Colonic mucosa (tissue), 4 donors: ENCODE measurements at regions of chr7 and their contacts with region 1.

Region 1: DNA sequence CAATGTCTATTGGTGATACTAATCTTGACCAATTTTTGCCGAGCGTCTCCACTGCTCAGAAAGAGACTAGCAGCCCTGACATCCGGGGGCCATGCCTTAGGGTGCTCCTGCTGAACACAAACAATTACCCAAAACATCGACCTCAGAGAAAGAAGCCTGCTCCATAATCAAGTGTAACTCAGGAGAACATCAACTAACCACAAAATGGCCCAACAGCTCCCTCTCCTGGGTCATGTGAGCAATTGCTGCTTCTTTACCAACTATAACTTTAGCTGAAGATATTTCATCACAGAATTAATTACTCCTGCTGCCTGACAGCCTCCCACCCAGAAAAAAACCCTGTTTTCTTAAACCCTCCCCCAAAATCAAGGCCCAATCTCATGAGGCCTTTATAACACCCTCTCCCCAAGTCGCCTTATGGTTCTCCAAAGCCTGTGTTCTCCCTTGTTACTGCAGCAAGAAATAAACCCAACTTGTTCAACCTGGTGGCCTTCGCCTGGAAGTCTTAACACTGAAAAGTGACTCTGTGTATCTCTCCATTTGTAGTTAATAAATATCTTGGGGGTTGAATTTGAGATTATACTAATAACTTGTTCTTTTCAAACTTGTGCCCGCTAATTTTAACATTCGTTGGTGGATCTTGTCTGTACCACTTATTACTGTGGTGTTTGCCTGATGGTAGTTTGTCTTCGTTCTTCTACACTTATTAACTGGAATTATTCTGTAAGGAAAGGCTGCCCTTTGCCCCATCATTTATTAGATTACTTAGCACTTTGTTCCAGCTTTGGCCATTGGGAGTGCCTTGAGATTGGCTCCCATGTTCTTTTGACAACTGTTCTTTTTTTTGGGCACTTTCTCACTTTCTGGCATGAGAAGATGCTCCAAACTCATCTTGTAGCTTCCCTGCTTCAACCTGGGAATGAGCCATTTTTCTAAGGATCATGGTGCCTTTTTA is 21.2 kb upstream of the RAMP3 start:
- DNase-seq: peak; percentile 70
- H3K4me3 ChIP-seq: no peak overlapping the region
- H3K27ac ChIP-seq: no peak overlapping the region
- H3K4me1 ChIP-seq: no peaks in the 10 kb centered on the region
- H3K27me3 ChIP-seq: no peaks in the 10 kb centered on the region
- CTCF ChIP-seq: peak; percentile 85

Region 2: DNA sequence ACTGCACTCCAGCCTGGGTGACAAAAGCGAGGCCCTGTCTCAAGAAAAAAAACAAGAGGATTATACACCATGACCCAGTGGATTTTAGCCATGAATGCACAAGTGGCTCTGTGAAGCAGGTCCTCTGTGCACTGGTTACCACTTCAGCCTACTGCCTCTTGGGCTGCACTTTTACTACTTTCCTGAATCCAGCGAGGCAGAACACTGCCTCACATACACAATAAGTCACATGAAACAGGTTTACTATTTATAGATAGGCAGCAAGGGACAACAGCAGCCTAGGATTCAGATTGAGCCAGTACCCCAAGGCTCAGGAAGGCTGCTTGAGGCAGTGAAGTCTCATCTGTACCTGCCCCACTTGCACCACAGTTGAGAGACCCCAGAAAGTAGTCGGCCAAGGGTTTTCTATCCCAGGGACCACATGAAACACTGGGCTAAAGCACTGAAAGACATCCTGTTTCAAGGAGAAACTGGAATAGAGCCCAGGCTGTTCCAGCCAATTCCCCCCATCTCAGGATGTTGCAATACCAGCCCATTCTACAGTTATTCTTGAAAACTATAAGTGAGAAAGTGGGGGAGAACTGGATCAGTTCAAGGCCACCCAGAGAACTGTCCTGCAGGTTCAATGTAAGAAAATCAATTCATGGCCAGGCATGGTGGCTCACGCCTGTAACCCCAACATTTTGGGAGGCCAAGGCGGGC is 540.3 kb before region 1 on chr7:
- intact Hi-C with region 1: loop called (anchors 10 kb)
- DNase-seq: no peak
- H3K4me3 ChIP-seq: no peak overlapping the region
- H3K27ac ChIP-seq: no peak overlapping the region
- H3K4me1 ChIP-seq: no peaks in the 10 kb centered on the region
- H3K27me3 ChIP-seq: no peaks in the 10 kb centered on the region
- CTCF ChIP-seq: no peak

Region 3: DNA sequence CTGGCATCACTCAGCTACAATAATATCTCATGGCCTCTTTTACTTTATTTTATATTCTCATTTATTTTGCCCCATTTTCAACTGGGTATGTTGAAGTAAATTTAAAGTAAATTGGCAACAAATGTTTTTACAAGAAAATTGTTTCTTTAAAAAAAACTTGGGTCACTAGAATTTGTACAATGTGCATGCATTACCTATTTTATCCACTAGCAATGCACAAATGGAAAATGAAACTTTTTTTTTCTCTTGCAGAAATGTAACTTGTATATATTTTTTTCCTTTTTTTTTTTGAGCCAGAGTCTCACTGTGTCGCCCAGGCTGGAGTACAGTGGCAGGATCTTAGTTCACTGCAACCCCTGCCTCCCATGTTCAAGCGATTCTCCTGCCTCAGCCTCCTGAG is 278.2 kb before region 1 on chr7:
- intact Hi-C with region 1: loop called (anchors 10 kb)
- DNase-seq: no peak
- H3K4me3 ChIP-seq: no peak overlapping the region
- H3K27ac ChIP-seq: no peak overlapping the region
- H3K4me1 ChIP-seq: no peaks in the 10 kb centered on the region
- H3K27me3 ChIP-seq: no peaks in the 10 kb centered on the region
- CTCF ChIP-seq: no peak

Region 4: DNA sequence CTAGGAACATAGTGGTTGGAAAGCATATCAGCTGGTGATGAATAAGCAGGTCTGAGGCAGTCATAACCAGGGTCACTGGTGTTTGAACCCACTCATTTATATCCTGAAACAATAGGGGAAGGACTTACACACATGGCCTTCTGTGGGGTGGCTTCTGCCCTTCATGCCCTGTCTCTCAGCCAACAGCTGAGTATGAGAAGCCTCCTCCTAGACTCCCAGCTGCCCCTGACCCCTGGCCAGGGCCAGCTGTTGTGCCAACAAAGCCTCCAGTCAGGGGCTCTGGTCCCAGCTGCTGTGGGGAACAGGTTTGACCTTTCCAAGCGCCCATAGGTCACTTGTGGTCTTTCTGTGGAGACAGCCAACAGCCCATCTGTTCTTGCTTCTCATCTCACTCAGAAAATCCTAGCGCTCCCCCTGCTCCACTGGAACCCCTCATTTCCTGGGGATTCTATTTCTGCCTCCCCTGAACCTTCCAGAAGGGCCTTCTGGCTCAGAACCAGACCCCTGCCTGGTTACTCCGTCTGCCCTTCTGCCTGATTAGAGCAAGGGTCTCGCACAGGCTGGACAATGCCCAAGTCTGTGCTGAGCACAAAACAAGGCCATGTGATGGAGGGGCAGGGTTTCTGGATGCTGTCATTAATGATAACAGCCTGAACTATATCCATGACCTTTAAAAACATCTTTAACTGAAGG is 241.3 kb before region 1 on chr7:
- intact Hi-C with region 1: no loop called
- DNase-seq: no peak
- H3K4me3 ChIP-seq: no peak overlapping the region
- H3K27ac ChIP-seq: no peak overlapping the region
- H3K4me1 ChIP-seq: no peaks in the 10 kb centered on the region
- H3K27me3 ChIP-seq: no peaks in the 10 kb centered on the region
- CTCF ChIP-seq: no peak

Region 5: DNA sequence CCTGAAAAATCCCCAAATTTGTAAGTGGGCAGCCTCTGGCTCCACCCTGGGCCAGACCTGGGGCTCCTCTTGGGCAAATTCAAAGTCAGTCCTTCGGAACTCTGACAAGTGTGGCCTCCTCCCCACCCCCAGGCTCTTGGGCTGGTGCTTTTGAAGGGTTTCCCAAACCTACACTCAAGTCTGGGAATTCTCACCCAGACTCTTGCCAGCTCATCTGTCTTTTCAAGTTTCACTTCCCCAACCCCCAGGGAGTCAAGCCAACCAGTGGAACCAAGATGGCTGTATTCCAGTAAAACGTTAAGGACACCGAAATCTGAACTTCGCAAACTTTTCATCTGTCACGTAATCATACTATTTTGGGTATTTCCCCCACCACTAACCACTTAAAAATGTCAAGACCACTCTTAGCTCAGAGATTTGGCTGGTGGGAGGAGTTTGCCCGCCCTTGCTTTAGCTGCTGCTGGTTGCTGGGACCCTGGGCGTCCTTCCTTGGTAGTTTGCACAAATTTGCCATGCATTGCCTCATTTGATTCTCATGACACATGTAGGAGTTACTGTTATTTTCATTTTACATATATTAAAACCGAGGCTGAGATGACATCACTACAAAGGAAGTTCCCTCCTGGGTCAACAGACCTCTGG is 155.9 kb before region 1 on chr7:
- intact Hi-C with region 1: loop called (anchors 5 kb)
- DNase-seq: no peak
- H3K4me3 ChIP-seq: no peak overlapping the region
- H3K27ac ChIP-seq: peak overlapping the region; percentile 65
- H3K4me1 ChIP-seq: no peaks in the 10 kb centered on the region
- H3K27me3 ChIP-seq: no peaks in the 10 kb centered on the region
- CTCF ChIP-seq: no peak

Region 6: DNA sequence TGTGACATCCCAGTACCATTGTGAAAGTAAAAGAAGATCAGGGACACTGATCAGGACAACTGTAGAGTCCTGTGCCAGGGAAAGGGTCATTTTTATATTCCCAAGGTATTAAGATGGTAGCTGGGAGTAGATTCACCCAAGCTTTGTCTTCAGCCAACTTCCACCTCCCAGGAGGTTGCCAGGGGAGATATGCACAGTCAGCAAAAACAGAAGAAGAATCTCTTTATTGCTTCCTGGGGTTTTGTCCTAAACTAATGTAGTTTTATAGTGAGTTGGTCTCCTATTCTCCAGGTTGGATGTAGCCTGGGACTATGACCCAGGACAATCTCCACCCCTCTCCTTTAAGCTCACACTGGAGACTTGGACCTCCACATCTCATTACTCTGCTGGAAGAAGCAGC is 160.4 kb after region 1 on chr7:
- intact Hi-C with region 1: no loop called
- DNase-seq: no peak
- H3K4me3 ChIP-seq: no peak overlapping the region
- H3K27ac ChIP-seq: no peak overlapping the region
- H3K4me1 ChIP-seq: no peaks in the 10 kb centered on the region
- H3K27me3 ChIP-seq: no peaks in the 10 kb centered on the region
- CTCF ChIP-seq: no peak